Transverse colon (tissue), 4 donors: ENCODE measurements at regions of chr2 and their contacts with region 1.

Region 1: DNA sequence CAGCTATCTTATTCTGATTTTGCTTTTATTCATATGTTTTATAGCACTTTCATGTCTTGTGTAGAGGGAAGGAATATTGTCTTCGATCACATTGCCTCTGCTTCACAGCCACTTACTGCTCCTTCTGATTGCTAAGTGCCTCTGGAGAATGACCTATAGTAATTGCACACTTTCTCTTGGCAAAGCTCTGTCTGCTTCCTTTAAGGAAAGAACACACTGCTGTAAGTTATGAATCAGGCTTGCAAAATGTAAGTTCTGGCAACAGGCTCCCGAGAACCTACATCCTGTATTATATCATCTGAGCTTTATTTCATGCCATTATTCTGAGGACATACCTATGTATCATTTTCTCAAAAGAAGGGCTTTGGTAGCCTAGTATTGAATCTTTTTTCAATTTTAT is 170.7 kb downstream of the ZNF804A start:
- DNase-seq: no peak
- H3K4me3 ChIP-seq: no peak overlapping the region
- H3K27ac ChIP-seq: no peak overlapping the region
- H3K4me1 ChIP-seq: no peaks in the 10 kb centered on the region
- H3K27me3 ChIP-seq: no peaks in the 10 kb centered on the region
- CTCF ChIP-seq: no peak
- EP300 ChIP-seq: no peak
- POLR2A ChIP-seq: no peak

Region 2: GRCh38 chr2:184357033-184357432 is 412.0 kb before region 1 on chr2:
- in situ Hi-C with region 1: no loop called
- intact Hi-C with region 1: loop called (anchors 5 kb)
- DNase-seq: no peak
- H3K4me3 ChIP-seq: no peak overlapping the region
- H3K27ac ChIP-seq: no peak overlapping the region
- H3K4me1 ChIP-seq: no peaks in the 10 kb centered on the region
- H3K27me3 ChIP-seq: no peaks in the 10 kb centered on the region
- CTCF ChIP-seq: no peak
- EP300 ChIP-seq: no peak
- POLR2A ChIP-seq: no peak

Region 3: DNA sequence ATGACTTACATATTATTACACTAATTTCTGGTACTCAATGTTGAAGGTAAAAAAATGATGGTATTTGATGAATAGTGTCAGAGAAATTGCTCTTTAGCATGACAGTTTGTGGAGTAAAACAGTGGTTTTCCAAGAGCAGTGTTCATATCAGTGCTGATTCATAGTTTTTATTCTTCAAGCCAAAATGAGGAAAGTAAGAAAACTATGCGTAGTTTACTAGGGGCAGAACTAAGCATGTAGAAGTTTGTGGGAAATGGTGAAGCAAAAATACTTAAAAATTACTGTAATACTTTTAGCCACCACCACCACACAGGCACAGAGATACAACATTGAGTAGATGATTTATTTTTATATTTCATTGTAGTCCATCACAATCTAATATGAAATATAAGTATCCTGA is 33.4 kb before region 1 on chr2:
- in situ Hi-C with region 1: no loop called
- intact Hi-C with region 1: loop called (anchors 2 kb)
- DNase-seq: no peak
- H3K4me3 ChIP-seq: no peak overlapping the region
- H3K27ac ChIP-seq: no peak overlapping the region
- H3K4me1 ChIP-seq: no peaks in the 10 kb centered on the region
- H3K27me3 ChIP-seq: no peaks in the 10 kb centered on the region
- CTCF ChIP-seq: no peak
- EP300 ChIP-seq: no peak
- POLR2A ChIP-seq: no peak